ENCODE measurements at regions of chr7 and their contacts with region 1.

Region 1: GRCh38 chr7:132394283-132395198 is 181.7 kb downstream of the PLXNA4 start:
- DNase-seq: peak; percentile 20
- H3K4me3 Mint-ChIP-seq: no peak overlapping the region
- H3K27ac Mint-ChIP-seq: no peak overlapping the region
- H3K4me1 Mint-ChIP-seq: peaks cover 18% of the 10 kb centered on the region
- H3K27me3 Mint-ChIP-seq: peaks cover 19% of the 10 kb centered on the region

Region 2: GRCh38 chr7:132249614-132249972 is 144.9 kb before region 1 on chr7:
- intact Hi-C with region 1: no loop called
- DNase-seq: no peak
- H3K4me3 Mint-ChIP-seq: no peak overlapping the region
- H3K27ac Mint-ChIP-seq: no peak overlapping the region
- H3K4me1 Mint-ChIP-seq: no peaks in the 10 kb centered on the region
- H3K27me3 Mint-ChIP-seq: peaks cover 12% of the 10 kb centered on the region

Region 3: GRCh38 chr7:132318352-132319318 is 75.9 kb before region 1 on chr7:
- intact Hi-C with region 1: loop called (anchors 1 kb)
- DNase-seq: peak; percentile 57
- H3K4me3 Mint-ChIP-seq: peak overlapping the region; percentile 35
- H3K27ac Mint-ChIP-seq: no peak overlapping the region
- H3K4me1 Mint-ChIP-seq: peaks cover 16% of the 10 kb centered on the region
- H3K27me3 Mint-ChIP-seq: peaks cover 13% of the 10 kb centered on the region

Region 4: GRCh38 chr7:132443776-132444520 is 49.4 kb after region 1 on chr7:
- intact Hi-C with region 1: no loop called
- DNase-seq: no peak
- H3K4me3 Mint-ChIP-seq: no peak overlapping the region
- H3K27ac Mint-ChIP-seq: no peak overlapping the region
- H3K4me1 Mint-ChIP-seq: peaks cover 53% of the 10 kb centered on the region
- H3K27me3 Mint-ChIP-seq: peaks cover 6% of the 10 kb centered on the region

Region 5: DNA sequence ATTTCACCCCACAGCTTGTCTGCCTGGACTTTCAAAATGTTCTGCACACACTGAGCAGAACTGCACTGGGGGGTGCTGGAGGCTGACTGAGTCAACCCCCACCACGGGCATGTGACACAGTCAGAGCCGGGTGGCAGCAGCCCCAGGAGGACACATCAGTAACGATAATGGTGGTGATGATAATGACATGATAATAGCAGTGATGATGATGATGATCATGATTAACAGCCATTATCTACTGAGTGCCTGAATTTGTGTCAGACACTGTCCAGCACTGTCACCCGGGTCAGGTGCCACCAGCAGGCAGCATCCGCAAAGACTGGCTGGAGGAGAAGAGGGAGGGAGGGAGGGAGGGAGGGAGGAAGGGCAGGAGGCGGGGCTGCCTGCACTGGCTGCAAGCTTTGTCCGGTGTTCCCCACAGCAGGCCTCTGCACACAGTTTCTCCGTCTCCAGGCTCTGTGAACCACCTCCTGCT is 114.3 kb after region 1 on chr7:
- intact Hi-C with region 1: no loop called
- DNase-seq: no peak
- H3K4me3 Mint-ChIP-seq: no peak overlapping the region
- H3K27ac Mint-ChIP-seq: no peak overlapping the region
- H3K4me1 Mint-ChIP-seq: peaks cover 15% of the 10 kb centered on the region
- H3K27me3 Mint-ChIP-seq: peaks cover 18% of the 10 kb centered on the region